ENCODE measurements at regions of chr17 and their contacts with region 1.

Region 1: GRCh38 chr17:63946440-63947367 is 14.6 kb upstream of the CD79B start:
- DNase-seq: peak in 1 of 2 experiments; percentile 85
- H3K4me3 ChIP-seq: no peak overlapping the region
- H3K27ac ChIP-seq: no peak overlapping the region
- H3K4me1 ChIP-seq: peaks cover 0 to 8% (median 1%) of the 10 kb centered on the region in 4 experiments; a peak in 3 of 7 replicates
- H3K27me3 ChIP-seq: no peaks in the 10 kb centered on the region
- CTCF ChIP-seq: peak; percentile 75 to 92 (median 81)
- EP300 ChIP-seq: no peak
- POLR2A ChIP-seq: no peak
- RAD21 ChIP-seq: peak; percentile 64 to 71

Region 2: DNA sequence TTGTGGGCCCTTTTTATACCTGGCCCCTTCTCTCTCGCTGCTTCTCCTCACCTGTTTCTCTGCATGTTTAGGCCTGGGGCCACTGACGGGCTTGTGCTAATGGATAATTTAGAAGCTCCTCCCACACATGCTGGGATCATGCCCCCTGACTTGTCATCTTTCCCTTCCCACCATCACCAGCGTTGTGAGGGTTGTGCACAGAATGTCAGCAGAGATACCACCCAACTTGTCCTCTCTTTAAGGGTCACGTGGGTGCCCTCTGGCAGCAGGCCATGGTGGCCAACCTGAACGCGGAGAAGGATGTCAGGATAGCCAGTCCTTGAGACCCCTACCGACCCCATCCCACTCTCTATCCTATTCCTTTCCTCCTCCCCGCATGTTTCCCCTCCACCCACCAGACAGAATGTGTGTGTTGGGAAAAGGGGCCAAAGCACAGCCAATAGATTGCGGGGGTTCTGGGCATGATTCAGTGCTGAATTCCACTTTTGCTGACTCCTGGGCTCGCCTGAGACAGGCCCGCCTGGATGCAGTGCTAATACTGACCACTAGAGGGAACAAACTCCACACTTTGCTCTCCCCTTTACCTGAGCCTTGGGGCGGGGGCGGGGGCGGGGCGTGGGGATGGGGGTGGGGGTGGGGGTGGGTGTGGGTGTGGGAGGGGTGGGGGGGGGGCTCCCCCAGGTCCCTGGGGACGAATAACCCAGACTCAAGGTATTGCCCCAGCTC is 64.7 kb before region 1 on chr17 and contains the start of gene GH2:
- CTCF ChIA-PET with region 1: interaction called, 13 read pairs
- POLR2A ChIA-PET with region 1: no interaction called
- DNase-seq: peak in 1 of 2 experiments; percentile 88
- H3K4me3 ChIP-seq: peak within 1 kb of the TSS in 2 of 4 experiments; percentile 2 to 33; a peak in 3 of 8 replicates
- H3K27ac ChIP-seq: no peak within 1 kb of the TSS
- H3K4me1 ChIP-seq: peaks cover 3 to 15% (median 8%) of the 10 kb centered on the region in 4 experiments
- H3K27me3 ChIP-seq: no peaks in the 10 kb centered on the region
- CTCF ChIP-seq: peak; percentile 59 to 76 (median 72)
- EP300 ChIP-seq: no peak
- POLR2A ChIP-seq: no peak
- RAD21 ChIP-seq: peak; percentile 10 to 30; a peak in 2 of 4 replicates
- total RNA-seq, gene GH2: 0.60 and 1.2 TPM in 2 replicates

Region 3: DNA sequence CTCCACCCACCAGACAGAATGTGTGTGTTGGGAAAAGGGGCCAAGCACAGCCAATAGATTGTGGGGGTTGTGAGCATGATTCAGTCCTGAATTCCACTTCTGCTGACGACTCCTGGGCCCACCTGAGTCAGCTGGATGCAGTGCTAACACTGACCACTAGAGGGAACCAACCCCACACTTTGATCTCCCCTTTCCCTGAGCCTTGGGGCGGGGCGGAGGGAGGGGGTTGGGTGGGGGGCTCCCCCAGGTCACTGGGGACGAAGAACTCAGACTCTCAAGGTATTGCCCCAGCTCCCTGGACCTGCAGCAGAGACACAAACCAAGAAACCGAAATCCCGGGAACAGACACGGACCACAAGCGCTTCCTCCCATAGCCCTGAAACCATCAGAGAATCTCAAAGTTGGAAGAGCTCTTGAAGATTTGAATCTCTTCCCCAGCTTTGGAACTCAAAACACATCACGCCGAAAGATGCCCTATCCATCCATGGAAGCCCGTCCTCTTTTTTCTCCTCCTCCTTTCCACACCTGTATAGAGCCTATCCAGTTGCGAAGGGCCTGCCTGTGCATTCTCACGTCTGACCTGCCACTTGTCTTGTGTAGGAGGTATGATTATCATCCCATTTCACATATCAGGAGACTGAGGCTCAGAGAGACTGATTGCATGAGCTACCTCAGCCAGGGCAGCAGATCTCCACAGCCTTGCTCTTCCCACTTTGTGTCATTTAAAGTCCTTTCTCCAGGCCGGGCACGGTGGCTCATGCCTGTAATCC is 34.9 kb before region 1 on chr17:
- CTCF ChIA-PET with region 1: interaction called, 270 read pairs
- POLR2A ChIA-PET with region 1: interaction called, 6 read pairs
- DNase-seq: peak in 1 of 2 experiments; percentile 87
- H3K4me3 ChIP-seq: no peak overlapping the region
- H3K27ac ChIP-seq: no peak overlapping the region
- H3K4me1 ChIP-seq: peaks cover 0 to 2% (median under 1%) of the 10 kb centered on the region in 4 experiments; a peak in 2 of 7 replicates
- H3K27me3 ChIP-seq: no peaks in the 10 kb centered on the region
- CTCF ChIP-seq: peak; percentile 63 to 83 (median 69)
- EP300 ChIP-seq: no peak
- POLR2A ChIP-seq: no peak
- RAD21 ChIP-seq: peak; percentile 62 to 65

Region 4: DNA sequence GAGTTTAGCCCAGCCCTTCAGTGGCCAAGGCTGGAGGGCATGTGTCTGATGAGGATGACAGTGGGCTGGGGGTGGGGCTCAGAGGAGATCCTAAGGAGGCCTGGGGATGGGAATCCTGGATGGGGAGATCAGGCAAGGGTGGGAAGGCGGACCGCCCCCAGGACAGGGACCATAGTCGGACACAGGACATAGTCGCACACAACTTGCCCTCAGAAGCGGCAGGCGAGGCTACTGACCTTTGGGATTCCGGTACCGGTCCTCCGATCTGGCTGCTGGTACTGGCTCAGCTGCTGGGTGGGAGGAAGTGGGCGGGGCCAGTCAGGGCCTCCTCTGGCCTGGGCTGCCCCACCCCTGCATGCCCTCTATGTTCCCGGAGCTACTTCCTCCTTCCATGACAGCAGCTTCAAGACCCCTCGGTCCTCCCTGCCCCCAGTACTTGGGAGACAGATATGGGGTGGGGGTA is 15.6 kb before region 1 on chr17:
- CTCF ChIA-PET with region 1: interaction called, 53 read pairs
- POLR2A ChIA-PET with region 1: interaction called, 9 read pairs
- DNase-seq: peak in 1 of 2 experiments; percentile 75
- H3K4me3 ChIP-seq: no peak overlapping the region
- H3K27ac ChIP-seq: no peak overlapping the region
- H3K4me1 ChIP-seq: peaks cover 0 to 16% (median 12%) of the 10 kb centered on the region in 4 experiments; a peak in 6 of 7 replicates
- H3K27me3 ChIP-seq: no peaks in the 10 kb centered on the region
- CTCF ChIP-seq: no peak
- EP300 ChIP-seq: no peak
- POLR2A ChIP-seq: no peak
- RAD21 ChIP-seq: no peak

Region 5: GRCh38 chr17:63966646-63967264 is 20.1 kb after region 1 on chr17:
- CTCF ChIA-PET with region 1: interaction called, 36 read pairs
- POLR2A ChIA-PET with region 1: interaction called, 19 read pairs
- DNase-seq: no peak
- H3K4me3 ChIP-seq: no peak overlapping the region
- H3K27ac ChIP-seq: no peak overlapping the region
- H3K4me1 ChIP-seq: peaks cover 0 to 10% (median 4%) of the 10 kb centered on the region in 4 experiments; a peak in 6 of 7 replicates
- H3K27me3 ChIP-seq: no peaks in the 10 kb centered on the region
- CTCF ChIP-seq: no peak
- EP300 ChIP-seq: no peak
- POLR2A ChIP-seq: no peak
- RAD21 ChIP-seq: no peak

Region 6: DNA sequence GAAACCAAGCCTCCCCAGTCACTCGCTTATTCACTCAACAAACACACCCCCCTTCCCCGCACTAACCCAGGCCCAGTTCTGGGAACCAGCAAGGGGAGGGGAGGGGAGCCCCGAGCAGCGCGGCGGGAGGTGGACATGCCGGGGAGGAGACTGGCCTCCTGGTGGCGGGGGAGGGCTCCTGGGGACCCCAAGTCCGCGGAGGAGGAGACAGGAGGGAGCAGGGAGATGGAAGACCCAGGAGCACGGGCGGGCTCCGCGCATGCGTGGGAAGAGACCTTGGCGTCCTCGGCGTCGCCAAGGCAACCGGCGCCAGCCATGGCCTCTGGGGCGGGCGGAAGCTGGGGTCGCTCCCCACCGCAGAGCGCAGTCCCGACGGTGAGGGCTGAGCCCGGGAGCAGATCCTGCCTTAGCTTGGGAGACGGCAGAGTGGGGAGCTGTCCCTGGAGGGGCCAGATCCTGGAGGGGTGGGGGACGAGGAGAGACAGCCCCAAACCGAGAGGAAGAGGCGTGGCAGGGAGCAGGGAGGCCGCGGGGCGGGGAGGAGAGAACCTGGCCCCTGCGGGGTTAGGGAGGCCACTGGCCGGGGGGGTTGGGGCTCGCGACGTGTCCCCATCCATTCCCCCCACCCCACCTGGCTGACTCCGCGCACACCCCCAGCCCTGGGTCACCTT is 51.5 kb after region 1 on chr17 and contains the start of gene PRR29:
- CTCF ChIA-PET with region 1: interaction called, 13 read pairs
- POLR2A ChIA-PET with region 1: interaction called, 4 read pairs
- DNase-seq: peak in 1 of 2 experiments; percentile 95
- H3K4me3 ChIP-seq: peak within 1 kb of the TSS; percentile 62 to 87 (median 76)
- H3K27ac ChIP-seq: no peak within 1 kb of the TSS
- H3K4me1 ChIP-seq: peaks cover 3 to 14% (median 6%) of the 10 kb centered on the region in 4 experiments
- H3K27me3 ChIP-seq: peaks cover 0 to 28% (median 16%) of the 10 kb centered on the region in 4 experiments; a peak in 5 of 7 replicates
- CTCF ChIP-seq: no peak
- EP300 ChIP-seq: no peak
- POLR2A ChIP-seq: no peak
- RAD21 ChIP-seq: no peak
- total RNA-seq, gene PRR29: 0.61 and 0.67 TPM in 2 replicates